ENCODE measurements at regions of chrX and their contacts with region 1.

Region 1: GRCh38 chrX:150365051-150365989 is 2.2 kb downstream of the MAMLD1 start:
- DNase-seq: peak; percentile 68 to 88 (median 75)
- ATAC-seq: peak; percentile 49 to 74 (median 64)
- H3K4me3 ChIP-seq: peak overlapping the region; percentile 19 to 86 (median 64)
- H3K27ac ChIP-seq: peak overlapping the region in 11 of 12 donors; percentile 59 to 90 (median 79)
- H3K4me1 ChIP-seq: peaks cover 0 to 20% (median 5%) of the 10 kb centered on the region in 12 donors
- H3K27me3 ChIP-seq: peaks cover 0 to 41% (median 0%) of the 10 kb centered on the region in 9 donors
- CTCF ChIP-seq: peak; percentile 41 to 69 (median 59)
- POLR2A ChIP-seq: peak in 1 of 2 donors; percentile 17

Region 2: GRCh38 chrX:149962859-149963757 is 402.2 kb before region 1 on chrX:
- intact Hi-C with region 1: loop called in 5 of 10 experiments (anchors 1 to 10 kb)
- DNase-seq: peak in 4 of 5 donors; percentile 31 to 54 (median 42)
- ATAC-seq: peak in 3 of 4 donors; percentile 86 to 91 (median 89)
- H3K4me3 ChIP-seq: no peak overlapping the region
- H3K27ac ChIP-seq: peak overlapping the region in 1 of 12 donors; percentile 48
- H3K4me1 ChIP-seq: peaks cover 0 to 6% (median 0%) of the 10 kb centered on the region in 12 donors
- H3K27me3 ChIP-seq: no peaks in the 10 kb centered on the region
- CTCF ChIP-seq: peak; percentile 41 to 71 (median 60)
- POLR2A ChIP-seq: no peak

Region 3: DNA sequence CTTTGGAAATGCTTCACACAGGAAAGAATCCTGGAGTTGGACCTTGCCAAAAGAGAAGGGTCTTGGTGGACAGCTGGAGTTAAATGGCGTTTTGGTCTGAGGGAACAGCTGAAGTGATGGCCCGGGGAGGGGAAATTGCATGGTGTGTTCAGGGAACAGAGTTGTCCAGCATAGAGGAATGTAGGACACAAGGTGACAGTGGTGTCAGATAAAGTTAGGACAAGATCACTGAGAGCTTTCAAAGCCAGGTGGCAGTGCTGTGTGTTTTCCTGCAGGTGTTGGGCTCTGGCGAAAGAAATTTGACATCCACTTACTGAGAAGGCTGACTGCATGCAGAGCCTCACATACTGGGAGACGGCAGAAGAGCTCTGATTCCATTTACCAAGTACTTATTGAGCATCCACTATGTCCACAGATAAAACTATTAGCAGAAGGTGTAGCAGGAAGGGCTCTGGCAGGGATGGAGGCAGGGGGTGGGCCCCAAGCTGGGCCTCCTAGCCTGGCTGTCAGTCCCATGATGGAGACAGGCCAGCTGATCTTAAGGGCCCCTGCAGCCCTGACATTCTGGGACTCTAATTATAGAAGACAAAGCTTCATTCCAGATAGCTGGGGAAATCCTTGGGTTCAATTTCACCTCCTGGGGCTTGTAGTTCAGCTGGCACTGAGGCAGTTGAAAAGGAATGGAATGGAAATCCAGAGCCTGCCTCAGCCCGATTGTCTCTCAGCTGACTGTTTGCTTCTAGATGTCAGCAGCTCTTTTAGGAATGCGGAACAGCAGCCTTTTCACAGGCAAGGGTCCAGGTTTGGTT is 152.4 kb before region 1 on chrX:
- intact Hi-C with region 1: loop called in 6 of 10 experiments (anchors 5 to 10 kb)
- DNase-seq: peak in 4 of 5 donors; percentile 34 to 79 (median 44)
- ATAC-seq: peak; percentile 86 to 92 (median 90)
- H3K4me3 ChIP-seq: no peak overlapping the region
- H3K27ac ChIP-seq: peak overlapping the region in 8 of 12 donors; percentile 20 to 70 (median 56)
- H3K4me1 ChIP-seq: peaks cover 0 to 20% (median 4%) of the 10 kb centered on the region in 12 donors
- H3K27me3 ChIP-seq: peaks cover 0 to 2% (median 0%) of the 10 kb centered on the region in 9 donors
- CTCF ChIP-seq: peak in 3 of 12 donors; percentile 23 to 38 (median 23)
- POLR2A ChIP-seq: no peak

Region 4: GRCh38 chrX:150405576-150405975 is 40.3 kb after region 1 on chrX:
- intact Hi-C with region 1: loop called in 1 of 10 experiments (anchors 5 kb)
- DNase-seq: no peak
- ATAC-seq: no peak
- H3K4me3 ChIP-seq: no peak overlapping the region
- H3K27ac ChIP-seq: no peak overlapping the region
- H3K4me1 ChIP-seq: peaks cover 0 to 20% (median 4%) of the 10 kb centered on the region in 12 donors
- H3K27me3 ChIP-seq: no peaks in the 10 kb centered on the region
- CTCF ChIP-seq: peak in 1 of 12 donors; percentile 17
- POLR2A ChIP-seq: no peak

Region 5: GRCh38 chrX:150486011-150486410 is 120.7 kb after region 1 on chrX:
- intact Hi-C with region 1: loop called in 7 of 10 experiments (anchors 5 to 10 kb)
- DNase-seq: peak in 4 of 5 donors; percentile 22 to 57 (median 40)
- ATAC-seq: peak in 3 of 4 donors; percentile 64 to 73 (median 68)
- H3K4me3 ChIP-seq: no peak overlapping the region
- H3K27ac ChIP-seq: no peak overlapping the region
- H3K4me1 ChIP-seq: no peaks in the 10 kb centered on the region
- H3K27me3 ChIP-seq: no peaks in the 10 kb centered on the region
- CTCF ChIP-seq: peak; percentile 40 to 64 (median 54)
- POLR2A ChIP-seq: no peak

Region 6: GRCh38 chrX:150587585-150588503 is 222.5 kb after region 1 on chrX:
- intact Hi-C with region 1: loop called in 2 of 10 experiments (anchors 10 kb)
- DNase-seq: peak in 1 of 5 donors; percentile 20
- ATAC-seq: no peak
- H3K4me3 ChIP-seq: no peak overlapping the region
- H3K27ac ChIP-seq: no peak overlapping the region
- H3K4me1 ChIP-seq: peaks cover 0 to 10% (median 0%) of the 10 kb centered on the region in 12 donors
- H3K27me3 ChIP-seq: peaks cover 0 to 10% (median 0%) of the 10 kb centered on the region in 9 donors
- CTCF ChIP-seq: peak; percentile 43 to 74 (median 58)
- POLR2A ChIP-seq: no peak

Region 7: DNA sequence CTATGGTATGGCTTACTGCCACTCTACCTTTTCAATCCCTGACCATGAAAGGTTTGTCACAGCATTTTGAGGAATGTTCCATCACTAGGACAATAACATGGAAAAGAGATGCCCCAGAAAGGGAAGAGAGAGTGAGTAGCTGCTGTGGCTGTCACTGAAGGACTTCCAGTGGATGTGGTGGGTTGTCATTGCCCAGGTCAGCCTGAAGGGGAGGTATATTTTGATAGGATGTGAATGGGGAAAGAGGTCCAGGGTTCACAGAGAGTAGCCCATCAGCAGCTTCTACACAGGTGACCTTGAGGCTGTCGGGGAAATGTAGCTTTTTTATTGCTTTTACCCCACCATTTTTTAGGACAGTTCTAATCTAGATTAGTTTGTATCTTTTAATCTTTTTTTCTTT is 233.9 kb after region 1 on chrX:
- intact Hi-C with region 1: no loop called
- DNase-seq: no peak
- ATAC-seq: no peak
- H3K4me3 ChIP-seq: no peak overlapping the region
- H3K27ac ChIP-seq: no peak overlapping the region
- H3K4me1 ChIP-seq: no peaks in the 10 kb centered on the region
- H3K27me3 ChIP-seq: no peaks in the 10 kb centered on the region
- CTCF ChIP-seq: no peak
- POLR2A ChIP-seq: no peak

Region 8: GRCh38 chrX:150869450-150869849 is 504.1 kb after region 1 on chrX:
- intact Hi-C with region 1: no loop called
- DNase-seq: peak in 4 of 5 donors; percentile 10 to 44 (median 28)
- ATAC-seq: peak; percentile 67 to 83 (median 74)
- H3K4me3 ChIP-seq: no peak overlapping the region
- H3K27ac ChIP-seq: peak overlapping the region in 8 of 12 donors; percentile 13 to 76 (median 44)
- H3K4me1 ChIP-seq: peaks cover 0 to 44% (median 20%) of the 10 kb centered on the region in 12 donors
- H3K27me3 ChIP-seq: no peaks in the 10 kb centered on the region
- CTCF ChIP-seq: no peak
- POLR2A ChIP-seq: no peak